Lower leg skin (tissue), 4 donors: ENCODE measurements at regions of chr5 and their contacts with region 1.

Region 1: GRCh38 chr5:97162045-97162444 is 19.6 kb upstream of the LIX1 start:
- DNase-seq: peak in 1 of 2 donors; percentile 68
- H3K4me3 ChIP-seq: no peak overlapping the region
- CTCF ChIP-seq: no peak
- POLR2A ChIP-seq: no peak

Region 2: DNA sequence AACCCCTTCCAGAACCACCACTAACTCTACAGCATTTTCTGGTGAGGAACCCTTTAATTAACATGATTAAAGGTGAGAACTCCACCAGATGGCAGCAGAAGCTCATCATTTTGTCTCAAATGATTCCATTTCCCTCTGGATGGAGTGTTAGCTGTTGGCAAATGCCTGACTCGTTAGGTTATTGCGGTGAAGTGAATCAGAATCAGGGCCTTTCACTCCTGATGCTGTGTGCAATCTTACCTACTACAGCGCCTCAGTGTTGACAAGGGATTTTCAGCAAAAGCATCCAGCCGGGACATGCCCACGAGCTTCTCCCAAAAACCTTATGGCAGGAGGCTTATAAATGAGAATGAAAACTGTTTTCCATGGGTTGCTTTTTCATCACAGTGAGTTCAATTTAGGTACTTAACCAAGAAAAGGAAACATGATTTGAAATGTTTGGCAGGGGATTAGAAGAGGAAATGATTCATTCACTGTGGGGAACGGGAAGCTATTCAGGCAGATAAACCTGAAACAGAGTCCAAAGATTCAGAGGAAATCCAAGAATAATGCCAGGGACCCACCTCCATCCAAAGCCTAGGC is 547.8 kb before region 1 on chr5:
- intact Hi-C with region 1: loop called (anchors 10 kb)
- DNase-seq: peak in 1 of 2 donors; percentile 71
- H3K4me3 ChIP-seq: no peak overlapping the region
- CTCF ChIP-seq: no peak
- POLR2A ChIP-seq: no peak

Region 3: DNA sequence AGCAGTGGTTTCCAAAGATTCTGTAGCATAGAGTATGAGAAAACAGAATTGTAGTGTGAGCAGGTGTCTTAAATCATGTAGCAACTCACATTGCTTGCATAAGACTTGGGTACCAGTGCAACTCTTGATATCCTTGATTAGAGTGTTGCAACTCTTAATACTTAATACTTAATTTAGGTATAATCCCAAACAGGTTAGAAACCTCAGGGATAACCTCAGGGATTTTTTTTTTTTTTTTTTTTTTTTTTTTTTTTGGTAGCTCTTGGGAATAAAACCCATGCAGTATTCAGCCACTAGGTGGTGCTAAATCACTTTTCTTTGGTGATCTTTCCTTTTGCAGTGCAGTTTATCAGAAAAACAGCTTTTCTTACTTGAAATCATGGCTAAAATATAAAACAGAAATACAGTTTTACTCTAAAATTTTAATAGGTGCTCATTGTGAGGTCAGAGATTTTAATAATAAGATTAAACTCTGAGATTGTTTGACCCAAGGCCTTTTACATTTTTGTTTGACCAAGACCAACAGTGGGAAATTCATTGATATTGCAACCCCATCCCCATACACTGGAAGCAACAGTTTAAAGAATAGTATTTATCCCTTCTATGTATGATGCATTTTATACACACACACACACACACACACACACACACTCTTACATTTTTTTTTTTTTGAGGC is 409.6 kb before region 1 on chr5:
- intact Hi-C with region 1: loop called (anchors 10 kb)
- DNase-seq: peak in 1 of 2 donors; percentile 36
- H3K4me3 ChIP-seq: no peak overlapping the region
- CTCF ChIP-seq: no peak
- POLR2A ChIP-seq: no peak

Region 4: DNA sequence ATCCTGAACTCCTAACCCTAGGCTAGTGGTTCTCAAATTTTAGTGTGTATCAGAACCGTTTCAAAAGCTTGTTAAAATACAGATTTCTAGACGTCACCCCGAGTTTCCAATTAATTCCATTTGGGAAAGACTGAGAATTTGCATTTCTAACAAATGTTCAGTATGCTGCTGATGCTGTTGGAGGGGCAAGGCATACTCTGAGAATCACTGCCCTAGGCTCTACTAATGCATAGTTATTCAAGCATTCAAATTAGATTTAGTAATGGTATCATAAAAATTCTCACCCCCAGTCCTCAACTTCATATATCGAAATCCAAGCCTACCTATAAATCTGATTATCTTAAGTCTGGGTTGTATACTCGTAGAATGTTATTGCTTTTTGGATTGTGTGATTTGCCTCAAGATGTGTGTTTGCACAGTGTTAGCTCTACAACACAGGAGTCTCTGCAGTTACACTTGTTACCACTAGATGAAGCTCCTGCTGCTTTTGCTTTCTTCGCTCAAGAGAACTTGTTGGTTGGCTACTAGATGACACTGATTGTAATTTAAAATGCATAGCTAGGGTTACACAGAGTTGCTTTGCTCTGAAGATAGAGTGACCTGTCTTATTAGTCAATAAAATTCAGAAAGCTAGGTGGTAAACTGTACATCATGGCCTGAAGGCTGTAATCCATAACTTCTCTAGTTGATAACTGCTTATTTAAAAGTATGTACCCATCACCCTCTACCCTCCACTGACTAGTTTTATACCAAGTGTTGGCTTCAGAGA is 293.3 kb before region 1 on chr5:
- intact Hi-C with region 1: loop called (anchors 2 kb)
- DNase-seq: no peak
- H3K4me3 ChIP-seq: no peak overlapping the region
- CTCF ChIP-seq: no peak
- POLR2A ChIP-seq: no peak